Activated naive CD4-positive, alpha-beta T cell treated with anti-CD3 and anti-CD28 coated beads, Interleukin-2, amount 10 ng/mL, durations not matched to agents 7 days and 5 days (primary cell): ENCODE measurements at regions of chr19 and their contacts with region 1.

Region 1: DNA sequence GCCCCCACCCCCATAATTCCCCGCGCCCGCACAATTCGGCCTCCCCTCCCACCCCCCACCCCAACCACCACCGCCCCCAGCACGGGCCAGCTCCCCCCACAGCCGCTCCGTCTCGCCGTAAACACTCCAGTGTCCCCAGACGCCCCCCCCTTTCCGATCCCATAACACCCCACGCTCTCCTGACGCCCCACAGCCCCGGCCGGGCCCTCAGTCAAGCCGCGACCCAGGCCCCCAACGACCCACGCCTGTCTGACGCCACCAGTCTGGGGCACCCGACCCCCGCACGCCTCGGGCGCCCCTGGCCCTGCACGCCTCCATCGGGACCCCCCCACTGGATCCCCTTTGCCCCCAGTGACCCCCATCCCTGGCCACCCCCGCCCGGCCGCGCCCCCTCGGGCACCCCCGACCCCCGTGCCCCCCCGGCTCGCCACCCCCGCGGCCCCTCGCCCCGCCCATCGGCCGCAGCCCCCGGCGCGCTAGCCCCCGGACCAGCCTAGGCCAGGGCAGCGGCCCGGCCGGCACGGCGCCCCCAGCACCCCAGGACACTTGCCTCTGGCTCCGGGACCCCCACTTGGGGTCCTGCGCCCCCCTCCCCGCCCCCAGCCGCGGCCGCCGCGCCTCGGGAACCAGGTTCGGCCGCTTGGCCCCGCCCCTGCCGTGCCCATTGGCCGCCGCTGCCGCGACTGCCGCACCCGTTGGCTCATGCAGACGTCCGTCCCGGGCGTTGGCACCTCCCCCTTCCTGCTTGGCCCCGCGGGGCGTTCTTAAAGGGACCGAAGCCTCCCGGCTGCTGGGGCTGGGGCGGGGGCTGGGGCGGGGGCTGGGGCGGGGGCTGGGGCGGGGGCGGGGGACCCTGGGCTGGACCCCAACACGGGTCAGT is at the start of gene FKBP8:
- DNase-seq: peak; percentile 98
- H3K4me3 Mint-ChIP-seq: peak within 1 kb of the TSS; percentile 96
- H3K27ac Mint-ChIP-seq: peak within 1 kb of the TSS; percentile 99
- H3K4me1 Mint-ChIP-seq: peaks cover 34% of the 10 kb centered on the region
- H3K27me3 Mint-ChIP-seq: peaks cover 18% of the 10 kb centered on the region

Region 2: DNA sequence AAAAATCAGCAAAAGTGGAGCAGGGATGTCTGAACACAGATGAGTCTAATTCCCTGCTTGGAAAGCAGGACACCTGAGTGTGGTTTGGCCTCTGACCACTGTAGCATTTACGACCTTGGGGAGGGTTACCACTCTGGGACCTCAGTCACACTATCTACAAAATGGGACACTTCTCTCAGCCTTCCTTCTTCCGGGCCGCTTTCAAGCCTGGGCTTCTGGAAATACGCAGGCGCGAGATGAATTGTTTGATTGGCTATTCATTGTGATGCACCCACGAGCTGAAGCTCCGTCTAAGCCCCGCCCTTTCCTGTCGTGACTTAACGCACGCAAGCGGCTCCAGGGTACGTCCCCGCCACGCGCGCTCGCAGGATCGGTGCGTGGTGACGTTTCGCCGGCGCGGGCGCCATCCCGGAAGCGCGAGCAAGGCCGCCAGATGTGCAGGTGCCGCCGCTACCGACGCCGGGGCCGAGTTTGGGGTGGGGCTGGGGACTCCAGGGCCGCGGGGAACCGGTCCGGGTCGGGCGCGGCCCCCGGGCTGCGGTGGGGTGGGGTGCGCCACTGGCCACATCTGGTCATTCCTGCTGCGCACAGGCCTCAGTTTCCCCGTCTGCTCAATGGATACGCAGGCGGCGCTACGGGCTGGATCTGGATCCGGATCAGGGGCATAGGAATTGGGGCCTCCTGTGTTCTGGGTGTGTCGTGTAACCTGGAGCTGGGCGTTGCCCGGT is 14.5 kb after region 1 on chr19 and contains the start of gene KXD1:
- CTCF ChIA-PET with region 1: interaction called, 11 read pairs
- DNase-seq: peak; percentile 99
- H3K4me3 Mint-ChIP-seq: peak within 1 kb of the TSS; percentile 91
- H3K27ac Mint-ChIP-seq: peak within 1 kb of the TSS; percentile 96
- H3K4me1 Mint-ChIP-seq: peaks cover 25% of the 10 kb centered on the region
- H3K27me3 Mint-ChIP-seq: peaks cover 2% of the 10 kb centered on the region

Region 3: GRCh38 chr19:18571564-18572300 is 28.6 kb after region 1 on chr19 and contains the start of gene UBA52:
- CTCF ChIA-PET with region 1: interaction called, 11 read pairs
- DNase-seq: peak; percentile 99
- H3K4me3 Mint-ChIP-seq: peak within 1 kb of the TSS; percentile 81
- H3K27ac Mint-ChIP-seq: peak within 1 kb of the TSS; percentile 98
- H3K4me1 Mint-ChIP-seq: peaks cover 32% of the 10 kb centered on the region
- H3K27me3 Mint-ChIP-seq: no peaks in the 10 kb centered on the region